CD8-positive, alpha-beta T cell (primary cell): ENCODE measurements at regions of chrX and their contacts with region 1.

Region 1: DNA sequence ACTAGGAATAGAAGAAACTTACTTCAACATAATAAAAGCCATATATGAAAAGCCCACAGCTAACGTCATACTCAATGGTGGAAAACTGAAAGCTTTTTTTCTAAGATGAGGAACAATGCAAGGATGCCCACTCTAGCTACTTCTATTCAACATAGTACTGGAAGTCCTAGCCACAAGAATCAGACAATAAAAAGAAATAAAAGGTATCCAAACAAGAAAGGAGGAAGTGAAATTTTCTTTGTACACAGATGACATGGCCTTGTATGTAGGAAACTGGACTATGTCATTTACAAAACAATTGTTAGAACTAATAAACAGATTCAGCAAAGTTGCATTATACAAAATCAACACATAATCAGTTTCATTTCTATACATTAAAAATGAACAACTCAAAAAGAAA is 25.5 kb upstream of the NXT2 start:
- DNase-seq: no peak
- ATAC-seq: no peak
- H3K4me3 ChIP-seq: no peak overlapping the region
- H3K4me3 Mint-ChIP-seq: no peak overlapping the region
- H3K27ac ChIP-seq: no peak overlapping the region
- H3K27ac Mint-ChIP-seq: no peak overlapping the region
- H3K4me1 ChIP-seq: no peaks in the 10 kb centered on the region
- H3K4me1 Mint-ChIP-seq: no peaks in the 10 kb centered on the region
- H3K27me3 ChIP-seq: no peaks in the 10 kb centered on the region
- H3K27me3 Mint-ChIP-seq: peaks cover 32% of the 10 kb centered on the region
- CTCF ChIP-seq: no peak

Region 2: GRCh38 chrX:109553862-109554261 is 42.7 kb after region 1 on chrX:
- CTCF ChIA-PET with region 1: no interaction called
- POLR2A ChIA-PET with region 1: no interaction called
- intact Hi-C with region 1: loop called in 1 of 2 experiments (anchors 5 kb)
- DNase-seq: no peak
- ATAC-seq: no peak
- H3K4me3 ChIP-seq: no peak overlapping the region
- H3K4me3 Mint-ChIP-seq: no peak overlapping the region
- H3K27ac ChIP-seq: no peak overlapping the region
- H3K27ac Mint-ChIP-seq: no peak overlapping the region
- H3K4me1 ChIP-seq: no peaks in the 10 kb centered on the region
- H3K4me1 Mint-ChIP-seq: no peaks in the 10 kb centered on the region
- H3K27me3 ChIP-seq: no peaks in the 10 kb centered on the region
- H3K27me3 Mint-ChIP-seq: peaks cover 4% of the 10 kb centered on the region
- CTCF ChIP-seq: no peak